Sigmoid colon (tissue), 7 donors: ENCODE measurements at regions of chr1 and their contacts with region 1.

Region 1: DNA sequence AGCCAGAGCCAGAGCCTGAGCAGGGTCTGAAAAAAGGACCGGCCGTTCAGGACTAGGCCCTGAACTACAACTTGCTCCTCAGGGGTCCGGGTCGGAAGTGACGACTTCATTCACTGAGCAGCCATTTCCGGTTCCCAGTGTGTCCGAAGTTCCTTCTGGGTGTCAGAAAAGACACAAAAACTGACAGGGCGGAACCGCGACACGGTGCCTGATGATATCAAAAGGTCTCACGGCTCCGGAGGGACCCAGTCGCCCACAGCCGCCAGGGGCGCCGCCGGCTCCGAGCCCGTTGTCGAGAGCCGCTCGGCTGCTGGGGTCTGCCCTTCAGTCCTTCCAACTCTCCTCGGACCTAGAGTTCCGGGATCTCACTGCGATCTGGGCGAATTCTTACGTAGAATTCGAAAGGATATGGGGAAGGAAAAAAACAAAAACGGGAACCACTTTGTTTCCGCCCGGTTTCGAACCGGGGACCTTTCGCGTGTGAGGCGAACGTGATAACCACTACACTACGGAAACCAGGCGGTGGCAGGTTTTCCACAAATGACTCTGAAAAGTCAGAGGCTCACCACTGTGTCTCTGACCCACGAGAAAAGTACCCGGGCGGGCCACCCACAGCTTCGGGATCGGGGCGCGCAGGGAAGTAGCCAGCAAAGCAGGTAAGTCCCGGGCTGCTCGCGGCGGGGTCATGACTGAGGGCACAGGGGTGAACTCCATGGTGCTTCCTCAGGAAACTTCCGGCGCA is 31.8 kb upstream of the CFAP126 start:
- DNase-seq: peak; percentile 95
- H3K4me3 ChIP-seq: peak overlapping the region; percentile 71 to 95 (median 86)
- H3K27ac ChIP-seq: peak overlapping the region; percentile 96 to 100 (median 98)
- H3K4me1 ChIP-seq: peaks cover 0 to 15% (median 13%) of the 10 kb centered on the region in 4 donors
- H3K27me3 ChIP-seq: no peaks in the 10 kb centered on the region
- CTCF ChIP-seq: peak in 1 of 4 experiments; percentile 34
- EP300 ChIP-seq: peak in 2 of 4 donors; percentile 8 to 25
- POLR2A ChIP-seq: peak in 1 of 2 donors; percentile 34

Region 2: DNA sequence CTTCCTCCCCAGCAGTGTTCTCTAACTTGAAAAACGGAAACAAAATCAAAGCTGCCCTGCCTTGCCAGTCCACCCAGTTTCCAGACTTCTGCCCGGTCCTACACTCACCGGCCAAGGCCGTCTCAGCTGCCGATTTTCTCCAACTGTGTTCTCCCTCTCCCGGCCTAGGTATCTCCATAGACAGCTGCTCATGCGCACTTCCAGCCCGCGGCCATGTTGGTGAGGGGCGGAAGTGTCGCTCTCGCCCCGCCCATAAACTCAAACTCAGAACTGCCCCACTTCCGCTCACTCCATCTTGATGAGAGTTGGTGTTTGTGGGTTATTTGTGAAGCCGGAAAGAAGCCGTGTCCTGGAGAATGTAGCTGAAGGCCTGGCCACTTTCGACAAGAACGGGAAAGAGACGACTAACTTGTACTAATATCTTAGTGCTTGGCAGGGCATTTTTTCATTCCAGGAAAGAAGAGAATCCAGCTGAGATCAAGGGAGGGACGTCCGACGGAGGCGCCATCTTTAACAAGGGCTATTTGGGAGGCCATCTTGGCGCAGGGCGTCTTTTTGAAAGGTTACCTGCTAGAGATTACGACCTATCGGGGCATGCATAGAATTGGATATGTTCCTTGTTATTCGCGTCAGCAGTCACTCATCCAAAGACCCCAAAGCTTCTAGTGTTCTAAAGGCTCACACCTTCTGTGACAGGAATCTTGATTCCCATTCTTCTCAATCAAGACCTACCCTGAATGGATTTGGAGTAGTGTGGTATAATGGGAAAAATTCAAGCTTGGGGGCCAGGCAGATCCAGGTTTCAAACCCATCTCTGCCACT is 353.5 kb before region 1 on chr1 and contains the start of gene USF1:
- intact Hi-C with region 1: loop called (anchors 10 kb)
- DNase-seq: peak; percentile 96
- H3K4me3 ChIP-seq: peak within 1 kb of the TSS; percentile 74 to 88 (median 81)
- H3K27ac ChIP-seq: peak within 1 kb of the TSS; percentile 90 to 96 (median 94)
- H3K4me1 ChIP-seq: peaks cover 0 to 20% (median 15%) of the 10 kb centered on the region in 4 donors
- H3K27me3 ChIP-seq: no peaks in the 10 kb centered on the region
- CTCF ChIP-seq: no peak
- EP300 ChIP-seq: no peak
- POLR2A ChIP-seq: peak; percentile 48 to 61
- total RNA-seq, gene USF1: 54.8 to 76.2 (median 62.5) TPM

Region 3: GRCh38 chr1:161531986-161532643 is 132.7 kb after region 1 on chr1:
- intact Hi-C with region 1: loop called (anchors 2 kb)
- DNase-seq: no peak
- H3K4me3 ChIP-seq: peak overlapping the region in 3 of 4 donors; percentile 61 to 70 (median 69)
- H3K27ac ChIP-seq: peak overlapping the region in 3 of 4 donors; percentile 37 to 92 (median 57)
- H3K4me1 ChIP-seq: peaks cover 0 to 3% (median 0%) of the 10 kb centered on the region in 4 donors
- H3K27me3 ChIP-seq: no peaks in the 10 kb centered on the region
- CTCF ChIP-seq: no peak
- EP300 ChIP-seq: no peak
- POLR2A ChIP-seq: no peak